ENCODE measurements at regions of chr20 and their contacts with region 1.

Region 1: DNA sequence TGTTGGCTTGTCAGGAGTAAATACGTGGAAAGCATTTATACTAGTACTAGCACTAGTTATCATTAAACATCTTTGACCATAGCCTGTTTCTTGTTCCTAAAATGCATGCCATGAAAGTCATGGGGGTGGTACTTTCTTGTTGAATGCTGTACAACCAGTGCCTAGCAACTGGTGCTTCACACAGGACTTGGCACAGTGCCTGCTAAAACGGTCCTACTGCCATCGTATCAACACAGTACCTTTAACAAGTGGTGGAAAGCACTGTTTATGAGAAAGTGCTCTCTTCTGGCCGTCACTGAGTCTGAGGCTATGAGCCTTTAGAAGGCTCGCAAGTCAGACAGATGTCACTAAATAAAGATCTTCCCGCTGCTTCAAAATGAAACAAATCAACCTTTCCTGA is 21.6 kb downstream of the ZNFX1 start:
- DNase-seq: no peak
- H3K4me3 ChIP-seq: no peak overlapping the region
- H3K27ac ChIP-seq: no peak overlapping the region
- H3K4me1 ChIP-seq: no peaks in the 10 kb centered on the region
- H3K27me3 ChIP-seq: no peaks in the 10 kb centered on the region
- CTCF ChIP-seq: no peak

Region 2: GRCh38 chr20:49384437-49385088 is 128.3 kb after region 1 on chr20:
- CTCF ChIA-PET with region 1: no interaction called
- POLR2A ChIA-PET with region 1: interaction called, 10 read pairs
- intact Hi-C with region 1: no loop called
- DNase-seq: peak in 1 of 2 experiments; percentile 56
- H3K4me3 ChIP-seq: no peak overlapping the region
- H3K27ac ChIP-seq: no peak overlapping the region
- H3K4me1 ChIP-seq: no peaks in the 10 kb centered on the region
- H3K27me3 ChIP-seq: peaks cover 22% of the 10 kb centered on the region; the same call in 1 of the 2 replicates
- CTCF ChIP-seq: peak; percentile 91

Region 3: DNA sequence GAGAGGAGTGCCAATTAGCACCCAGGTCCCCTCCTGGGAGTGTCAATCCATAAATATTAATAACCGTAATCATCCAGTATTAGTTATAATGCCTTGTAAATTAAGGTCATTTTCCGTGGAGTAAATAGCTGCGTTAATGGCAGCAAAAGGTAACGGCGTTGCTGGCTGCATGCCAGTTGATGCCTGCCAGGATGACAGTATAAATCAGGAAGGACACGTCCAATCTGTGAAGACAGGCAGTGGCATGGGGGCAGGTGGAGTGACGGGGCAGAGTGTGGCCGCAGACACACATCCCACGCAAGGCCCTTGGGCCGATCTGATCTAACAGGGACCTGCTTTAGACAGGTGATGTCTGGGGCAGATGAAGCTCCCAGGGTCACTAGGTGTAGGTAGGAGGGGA is 177.1 kb after region 1 on chr20:
- CTCF ChIA-PET with region 1: no interaction called
- POLR2A ChIA-PET with region 1: no interaction called
- intact Hi-C with region 1: no loop called
- DNase-seq: no peak
- H3K4me3 ChIP-seq: no peak overlapping the region
- H3K27ac ChIP-seq: no peak overlapping the region
- H3K4me1 ChIP-seq: no peaks in the 10 kb centered on the region
- H3K27me3 ChIP-seq: peaks cover 54% of the 10 kb centered on the region
- CTCF ChIP-seq: no peak